ENCODE measurements at regions of chr13 and their contacts with region 1.

Region 1: DNA sequence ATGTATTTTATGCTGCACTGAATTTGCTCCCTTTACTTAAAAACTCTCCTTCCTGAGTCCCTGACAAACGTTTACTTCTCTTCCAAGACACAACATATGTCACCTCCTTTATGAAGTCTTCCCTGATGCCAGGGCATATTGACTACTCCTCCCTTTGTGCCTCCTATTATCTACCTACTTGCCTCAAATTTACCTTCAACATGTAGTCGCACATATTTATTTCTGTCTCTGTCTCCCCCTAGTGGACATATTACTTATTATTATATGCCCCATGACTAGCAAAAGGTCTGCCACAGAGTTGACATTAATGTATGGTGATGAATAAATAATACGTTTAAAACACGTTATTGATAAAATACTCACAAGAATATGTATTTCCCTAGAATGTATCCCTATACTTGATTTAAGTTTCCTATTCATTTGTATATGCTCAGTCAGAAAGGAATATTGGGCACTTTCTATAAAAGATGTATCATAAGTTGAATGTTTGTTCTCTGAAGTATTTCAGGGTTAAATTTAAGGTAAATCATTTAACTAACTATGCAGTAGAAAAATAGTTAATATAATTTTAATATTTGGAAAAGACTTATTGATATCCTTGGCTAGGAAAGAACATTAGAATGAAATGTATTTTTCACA is 250.3 kb upstream of the ATXN8OS start:
- DNase-seq: no peak
- H3K4me3 ChIP-seq: no peak overlapping the region
- H3K27ac ChIP-seq: no peak overlapping the region
- H3K4me1 ChIP-seq: no peaks in the 10 kb centered on the region
- H3K27me3 ChIP-seq: no peaks in the 10 kb centered on the region
- CTCF ChIP-seq: peak; percentile 82

Region 2: DNA sequence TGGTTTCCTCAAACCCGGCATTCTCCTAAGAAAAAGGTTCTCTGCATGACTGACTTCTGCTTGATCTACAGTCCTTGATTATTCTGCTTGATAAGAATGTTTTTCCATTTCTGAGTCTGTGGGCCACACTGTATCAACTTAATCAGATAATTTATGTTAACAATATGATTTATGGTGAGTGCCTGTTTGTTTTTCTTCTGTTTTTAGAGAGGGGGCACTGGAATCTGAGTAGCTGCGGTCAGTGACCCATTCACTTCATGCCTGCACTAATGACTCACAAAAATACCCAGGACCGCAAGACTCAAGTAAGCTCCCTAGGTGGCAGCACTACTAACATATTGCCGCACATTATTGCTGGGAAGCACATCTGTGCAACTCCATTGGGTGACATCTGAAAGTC is 292.0 kb before region 1 on chr13:
- CTCF ChIA-PET with region 1: no interaction called
- POLR2A ChIA-PET with region 1: no interaction called
- intact Hi-C with region 1: loop called (anchors 5 kb)
- DNase-seq: peak; percentile 57 to 59
- H3K4me3 ChIP-seq: no peak overlapping the region
- H3K27ac ChIP-seq: no peak overlapping the region
- H3K4me1 ChIP-seq: no peaks in the 10 kb centered on the region
- H3K27me3 ChIP-seq: no peaks in the 10 kb centered on the region
- CTCF ChIP-seq: peak; percentile 44

Region 3: GRCh38 chr13:69579351-69579750 is 278.0 kb before region 1 on chr13:
- CTCF ChIA-PET with region 1: no interaction called
- POLR2A ChIA-PET with region 1: no interaction called
- intact Hi-C with region 1: loop called (anchors 2 kb)
- DNase-seq: no peak
- H3K4me3 ChIP-seq: no peak overlapping the region
- H3K27ac ChIP-seq: no peak overlapping the region
- H3K4me1 ChIP-seq: no peaks in the 10 kb centered on the region
- H3K27me3 ChIP-seq: no peaks in the 10 kb centered on the region
- CTCF ChIP-seq: no peak

Region 4: DNA sequence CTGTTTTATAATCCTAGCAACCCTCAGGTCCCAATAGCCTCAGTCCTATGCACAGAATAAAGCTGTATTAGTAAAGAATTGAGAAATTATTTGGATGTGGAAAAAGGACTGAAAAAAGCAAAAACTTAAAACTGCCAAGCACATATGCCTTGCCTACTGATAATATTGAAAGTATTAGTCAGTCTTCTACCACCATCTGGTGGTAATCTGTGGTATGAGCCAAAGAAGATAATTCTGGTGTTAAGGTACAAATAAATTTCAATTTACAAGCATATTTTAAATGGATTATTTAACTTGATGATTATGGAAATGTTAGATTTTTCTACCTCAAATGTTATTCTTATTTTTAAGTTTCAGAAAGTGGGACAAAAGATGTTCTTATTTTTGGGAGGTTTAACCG is 711.3 kb after region 1 on chr13:
- CTCF ChIA-PET with region 1: no interaction called
- POLR2A ChIA-PET with region 1: no interaction called
- intact Hi-C with region 1: loop called (anchors 5 kb)
- DNase-seq: no peak
- H3K4me3 ChIP-seq: no peak overlapping the region
- H3K27ac ChIP-seq: no peak overlapping the region
- H3K4me1 ChIP-seq: no peaks in the 10 kb centered on the region
- H3K27me3 ChIP-seq: no peaks in the 10 kb centered on the region
- CTCF ChIP-seq: peak; percentile 80